ENCODE measurements at regions of chr4 and their contacts with region 1.

Region 1: DNA sequence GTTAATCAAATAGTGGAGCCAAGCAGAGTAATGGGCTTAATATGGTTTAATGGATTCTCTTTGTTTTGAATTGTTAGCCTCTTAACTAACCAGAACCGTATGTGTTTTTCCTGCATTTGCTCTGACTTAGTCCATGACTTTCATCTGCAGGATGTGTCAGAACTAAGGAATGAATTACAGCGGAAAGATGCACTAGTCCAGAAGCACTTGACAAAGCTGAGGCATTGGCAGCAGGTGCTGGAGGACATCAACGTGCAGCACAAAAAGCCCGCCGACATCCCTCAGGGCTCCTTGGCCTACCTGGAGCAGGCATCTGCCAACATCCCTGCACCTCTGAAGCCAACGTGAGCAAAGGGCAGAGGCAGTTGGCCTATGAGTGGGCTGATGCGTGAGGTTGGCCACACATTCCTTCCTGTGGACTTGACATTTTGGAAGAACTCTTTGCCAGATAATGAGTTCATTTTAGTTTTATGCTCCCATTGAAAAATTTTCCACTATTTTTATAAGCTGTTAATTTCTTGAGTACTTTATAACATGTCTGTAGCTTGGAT is 9.1 kb downstream of the MED28 start:
- DNase-seq: no peak
- H3K4me3 ChIP-seq: no peak overlapping the region
- H3K27ac ChIP-seq: no peak overlapping the region
- H3K4me1 ChIP-seq: no peaks in the 10 kb centered on the region
- H3K27me3 ChIP-seq: no peaks in the 10 kb centered on the region
- CTCF ChIP-seq: no peak
- POLR2A ChIP-seq: no peak

Region 2: GRCh38 chr4:17339368-17339767 is 284.2 kb before region 1 on chr4:
- intact Hi-C with region 1: no loop called
- DNase-seq: no peak
- H3K4me3 ChIP-seq: no peak overlapping the region
- H3K27ac ChIP-seq: no peak overlapping the region
- H3K4me1 ChIP-seq: no peaks in the 10 kb centered on the region
- H3K27me3 ChIP-seq: no peaks in the 10 kb centered on the region
- CTCF ChIP-seq: no peak
- POLR2A ChIP-seq: no peak

Region 3: GRCh38 chr4:17565846-17566245 is 57.7 kb before region 1 on chr4:
- intact Hi-C with region 1: loop called (anchors 1 kb)
- DNase-seq: no peak
- H3K4me3 ChIP-seq: no peak overlapping the region
- H3K27ac ChIP-seq: no peak overlapping the region
- H3K4me1 ChIP-seq: no peaks in the 10 kb centered on the region
- H3K27me3 ChIP-seq: no peaks in the 10 kb centered on the region
- CTCF ChIP-seq: no peak
- POLR2A ChIP-seq: no peak

Region 4: GRCh38 chr4:17670423-17670822 is 46.9 kb after region 1 on chr4:
- intact Hi-C with region 1: no loop called
- DNase-seq: no peak
- H3K4me3 ChIP-seq: no peak overlapping the region
- H3K27ac ChIP-seq: no peak overlapping the region
- H3K4me1 ChIP-seq: no peaks in the 10 kb centered on the region
- H3K27me3 ChIP-seq: no peaks in the 10 kb centered on the region
- CTCF ChIP-seq: no peak
- POLR2A ChIP-seq: no peak

Measured in breast epithelium (tissue), 4 donors.